ENCODE measurements at regions of chr10 and their contacts with region 1.

Region 1: DNA sequence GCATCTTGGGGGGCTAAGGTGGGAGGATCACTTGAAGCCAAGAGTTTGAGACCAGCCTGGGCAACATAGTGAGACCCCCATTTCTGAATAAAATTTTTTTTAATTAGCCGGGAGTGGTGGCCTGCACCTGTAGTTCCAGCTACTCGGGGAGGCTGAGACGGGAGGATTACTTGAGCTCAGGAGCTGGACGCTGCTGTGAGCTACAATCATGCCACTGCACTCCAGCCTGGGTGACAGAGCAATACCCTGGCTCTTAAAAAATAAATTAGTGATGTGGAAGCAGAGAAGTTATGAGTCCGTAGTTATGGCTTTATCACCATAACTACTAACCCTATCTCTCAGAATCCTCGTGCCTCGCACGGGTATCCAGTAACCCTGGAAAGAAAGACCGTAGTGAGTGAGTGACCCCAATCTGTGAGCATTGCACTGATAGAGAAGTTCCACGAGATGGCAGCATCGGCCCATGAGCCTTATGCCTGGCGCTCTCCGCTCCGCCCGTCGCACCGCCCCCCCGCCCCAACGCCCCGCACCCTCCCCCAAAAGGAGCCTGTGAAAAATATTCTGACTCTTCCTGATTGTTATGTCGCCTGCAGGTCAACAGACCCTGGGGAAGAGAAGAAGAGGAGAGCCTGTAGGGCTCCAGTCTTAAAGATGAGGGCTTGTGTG is 4.9 kb upstream of the SLC29A3 start:
- DNase-seq: peak; percentile 49 to 83
- H3K4me3 ChIP-seq: peak overlapping the region in 1 of 4 donors; percentile 15
- H3K27ac ChIP-seq: peak overlapping the region in 4 of 5 donors; percentile 4 to 76 (median 32)
- H3K4me1 ChIP-seq: peaks cover 4 to 28% (median 17%) of the 10 kb centered on the region in 4 donors
- H3K27me3 ChIP-seq: no peaks in the 10 kb centered on the region
- CTCF ChIP-seq: peak in 4 of 7 experiments; percentile 46 to 90 (median 74)
- EP300 ChIP-seq: no peak
- POLR2A ChIP-seq: no peak

Region 2: GRCh38 chr10:70742537-70743429 is 571.4 kb before region 1 on chr10:
- intact Hi-C with region 1: no loop called
- DNase-seq: peak in 1 of 2 donors; percentile 92
- H3K4me3 ChIP-seq: no peak overlapping the region
- H3K27ac ChIP-seq: peak overlapping the region in 3 of 5 donors; percentile 34 to 61 (median 45)
- H3K4me1 ChIP-seq: peaks cover 5 to 30% (median 16%) of the 10 kb centered on the region in 4 donors
- H3K27me3 ChIP-seq: no peaks in the 10 kb centered on the region
- CTCF ChIP-seq: no peak
- EP300 ChIP-seq: no peak
- POLR2A ChIP-seq: no peak

Region 3: DNA sequence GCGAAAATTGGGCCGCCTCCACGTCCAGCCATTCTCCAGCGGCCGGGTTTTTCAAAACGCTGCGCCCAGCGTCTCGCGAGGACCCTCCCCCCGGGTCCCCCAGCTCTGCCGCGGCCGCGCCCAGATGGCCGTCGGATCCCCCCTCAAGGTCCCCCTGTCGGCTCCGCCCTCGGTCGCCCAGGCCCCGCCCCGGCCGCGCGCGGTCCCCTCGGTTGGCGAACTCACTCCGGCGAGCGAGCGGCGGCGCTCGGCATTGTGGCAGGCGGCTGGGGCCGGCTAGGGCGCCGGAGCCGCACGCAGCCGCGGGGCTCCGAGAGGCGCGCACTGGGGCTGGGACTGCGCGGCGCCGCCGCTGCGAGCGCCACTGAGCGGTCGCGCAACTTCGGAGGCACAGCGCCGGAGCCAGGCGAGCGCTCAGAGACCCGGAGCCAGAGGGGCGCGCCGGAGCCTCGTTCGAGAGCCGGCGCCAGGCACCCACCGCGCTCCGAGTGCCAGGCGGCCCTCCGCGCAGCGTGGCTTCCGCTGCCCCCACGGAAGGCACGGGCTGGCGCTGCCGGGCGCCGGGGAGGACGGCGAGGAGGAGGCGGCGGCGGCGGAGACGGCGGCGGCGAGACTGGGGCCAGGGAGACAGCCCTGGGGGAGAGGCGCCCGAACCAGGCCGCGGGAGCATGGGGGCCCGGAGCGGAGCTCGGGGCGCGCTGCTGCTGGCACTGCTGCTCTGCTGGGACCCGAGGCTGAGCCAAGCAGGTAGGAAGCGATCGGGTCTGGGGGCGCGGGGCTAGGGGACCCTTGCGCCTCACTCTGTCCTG is 101.6 kb before region 1 on chr10 and contains the start of gene UNC5B:
- intact Hi-C with region 1: no loop called
- DNase-seq: peak; percentile 92 to 97
- H3K4me3 ChIP-seq: peak within 1 kb of the TSS; percentile 65 to 79 (median 72)
- H3K27ac ChIP-seq: peak within 1 kb of the TSS; percentile 76 to 91 (median 88)
- H3K4me1 ChIP-seq: peaks cover 10 to 64% (median 61%) of the 10 kb centered on the region in 4 donors
- H3K27me3 ChIP-seq: peaks cover 0 to 73% (median 12%) of the 10 kb centered on the region in 3 donors
- CTCF ChIP-seq: peak in 2 of 7 experiments; percentile 23 to 51
- EP300 ChIP-seq: no peak
- POLR2A ChIP-seq: no peak
- total RNA-seq, gene UNC5B: 5.5 to 42.9 (median 9.4) TPM

Region 4: GRCh38 chr10:71246591-71247161 is 67.5 kb before region 1 on chr10:
- intact Hi-C with region 1: no loop called
- DNase-seq: peak; percentile 84 to 94
- H3K4me3 ChIP-seq: no peak overlapping the region
- H3K27ac ChIP-seq: peak overlapping the region; percentile 67 to 84 (median 71)
- H3K4me1 ChIP-seq: peaks cover 46 to 82% (median 71%) of the 10 kb centered on the region in 4 donors
- H3K27me3 ChIP-seq: no peaks in the 10 kb centered on the region
- CTCF ChIP-seq: no peak
- EP300 ChIP-seq: no peak
- POLR2A ChIP-seq: no peak

Region 5: GRCh38 chr10:71569775-71570588 is 255.8 kb after region 1 on chr10:
- intact Hi-C with region 1: loop called (anchors 5 kb)
- DNase-seq: peak; percentile 79 to 83
- H3K4me3 ChIP-seq: no peak overlapping the region
- H3K27ac ChIP-seq: no peak overlapping the region
- H3K4me1 ChIP-seq: no peaks in the 10 kb centered on the region
- H3K27me3 ChIP-seq: no peaks in the 10 kb centered on the region
- CTCF ChIP-seq: peak in 6 of 7 experiments; percentile 39 to 85 (median 74)
- EP300 ChIP-seq: no peak
- POLR2A ChIP-seq: no peak

Region 6: GRCh38 chr10:71868192-71868697 is 554.1 kb after region 1 on chr10:
- intact Hi-C with region 1: no loop called
- DNase-seq: peak in 1 of 2 donors; percentile 65
- H3K4me3 ChIP-seq: no peak overlapping the region
- H3K27ac ChIP-seq: peak overlapping the region in 1 of 5 donors; percentile 8
- H3K4me1 ChIP-seq: peaks cover 8 to 23% (median 19%) of the 10 kb centered on the region in 4 donors
- H3K27me3 ChIP-seq: no peaks in the 10 kb centered on the region
- CTCF ChIP-seq: no peak
- EP300 ChIP-seq: no peak
- POLR2A ChIP-seq: no peak